HepG2 (cell line): ENCODE measurements at regions of chr14 and their contacts with region 1.

Region 1: DNA sequence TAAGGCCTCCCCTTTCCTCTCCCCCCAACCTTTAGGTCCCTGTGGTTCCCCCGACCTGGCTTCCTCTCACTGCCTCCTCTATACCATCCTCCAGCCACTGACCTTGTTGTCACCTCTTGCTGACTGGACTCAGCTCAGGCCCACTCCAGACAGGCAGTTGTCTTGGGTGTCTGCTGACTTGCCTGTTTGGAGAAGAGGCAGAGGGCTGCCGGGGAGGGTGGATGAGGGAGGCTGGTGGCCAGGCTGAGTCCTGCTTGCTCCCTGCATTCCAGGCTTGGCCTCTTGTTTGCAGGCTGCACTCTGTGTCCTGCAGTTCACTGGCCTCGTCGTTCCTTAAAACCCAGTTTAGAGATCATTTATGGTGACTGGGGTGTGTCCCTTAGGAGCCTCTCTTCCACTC is 31.0 kb upstream of the RD3L start:
- DNase-seq: no peak
- ATAC-seq: peak; percentile 60
- H3K4me3 ChIP-seq: no peak overlapping the region
- H3K27ac ChIP-seq: no peak overlapping the region
- H3K4me1 ChIP-seq: 0 out of 2 replicates have a peak, but pooled peaks cover 8% of the 10 kb centered on the region
- H3K27me3 ChIP-seq: peaks cover 3% of the 10 kb centered on the region in 2 experiments; a peak in 2 of 5 replicates
- CTCF ChIP-seq: no peak
- EP300 ChIP-seq: no peak
- POLR2A ChIP-seq: no peak
- RAD21 ChIP-seq: no peak

Region 2: DNA sequence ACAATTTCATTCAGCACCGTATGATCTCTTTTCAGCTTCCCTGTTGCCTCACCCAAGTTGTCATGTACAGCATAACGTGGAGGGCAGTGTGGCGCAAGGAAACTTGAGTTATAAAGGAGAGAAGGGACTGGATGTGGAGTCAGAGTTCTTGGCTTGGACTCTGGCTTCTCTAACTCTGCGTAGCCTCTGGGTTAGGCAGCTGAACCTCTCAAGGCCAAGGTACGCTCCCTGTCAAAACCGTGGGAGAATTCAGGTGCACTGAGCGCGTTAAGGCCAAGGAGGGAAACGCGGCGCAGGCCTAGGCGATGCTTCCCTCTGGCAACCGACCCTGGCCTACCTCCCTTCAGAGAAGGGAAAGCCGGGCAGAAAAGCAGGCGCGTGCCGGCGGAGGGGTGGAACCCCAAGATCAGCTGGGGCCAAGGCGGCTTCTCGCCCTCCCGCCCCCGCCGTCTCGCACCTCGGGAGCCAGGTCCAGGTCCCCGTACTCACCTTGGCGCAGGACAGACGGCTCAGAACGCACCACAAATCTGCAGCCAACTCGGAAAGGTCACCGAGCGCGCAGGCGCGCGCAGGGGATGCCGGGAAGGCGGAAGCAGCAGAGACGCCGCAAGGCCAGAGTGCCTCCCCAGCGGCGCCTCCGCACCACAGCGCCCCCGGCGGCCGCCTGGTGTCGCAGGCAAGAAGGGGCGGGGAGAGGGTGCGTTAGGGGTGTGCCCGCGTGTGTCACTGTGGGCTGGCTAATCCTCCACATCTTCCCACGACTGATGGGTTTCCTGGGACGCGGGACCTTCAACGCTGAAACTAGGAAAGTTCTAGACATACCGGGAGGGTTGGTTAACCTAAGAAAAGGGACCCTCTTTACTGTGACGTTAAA is 52.1 kb before region 1 on chr14:
- CTCF ChIA-PET with region 1: no interaction called
- POLR2A ChIA-PET with region 1: no interaction called
- in situ Hi-C with region 1: loop called (anchors 10 kb)
- intact Hi-C with region 1: no loop called
- DNase-seq: peak; percentile 83
- ATAC-seq: peak; percentile 97
- H3K4me3 ChIP-seq: peak overlapping the region; percentile 89 to 93 (median 92)
- H3K27ac ChIP-seq: peak overlapping the region; percentile 84
- H3K4me1 ChIP-seq: peaks cover 42% of the 10 kb centered on the region
- H3K27me3 ChIP-seq: no peaks in the 10 kb centered on the region; a peak in 1 of 5 replicates
- CTCF ChIP-seq: peak; percentile 99
- EP300 ChIP-seq: peak in 1 of 2 experiments; percentile 35; a peak in 1 of 4 replicates
- POLR2A ChIP-seq: peak; percentile 73 to 95
- RAD21 ChIP-seq: peak; percentile 78

Region 3: GRCh38 chr14:104001003-104001402 is 27.6 kb after region 1 on chr14:
- CTCF ChIA-PET with region 1: no interaction called
- POLR2A ChIA-PET with region 1: no interaction called
- in situ Hi-C with region 1: no loop called
- intact Hi-C with region 1: no loop called
- DNase-seq: peak; percentile 21
- ATAC-seq: peak; percentile 91
- H3K4me3 ChIP-seq: no peak overlapping the region
- H3K27ac ChIP-seq: no peak overlapping the region
- H3K4me1 ChIP-seq: no peaks in the 10 kb centered on the region
- H3K27me3 ChIP-seq: peaks cover 1 to 29% of the 10 kb centered on the region in 2 experiments; a peak in 3 of 5 replicates
- CTCF ChIP-seq: peak; percentile 66
- EP300 ChIP-seq: no peak
- POLR2A ChIP-seq: no peak
- RAD21 ChIP-seq: 0 out of 2 replicates have a peak, but pooled peaks have one; percentile 17